ENCODE measurements at regions of chr10 and their contacts with region 1.

Region 1: DNA sequence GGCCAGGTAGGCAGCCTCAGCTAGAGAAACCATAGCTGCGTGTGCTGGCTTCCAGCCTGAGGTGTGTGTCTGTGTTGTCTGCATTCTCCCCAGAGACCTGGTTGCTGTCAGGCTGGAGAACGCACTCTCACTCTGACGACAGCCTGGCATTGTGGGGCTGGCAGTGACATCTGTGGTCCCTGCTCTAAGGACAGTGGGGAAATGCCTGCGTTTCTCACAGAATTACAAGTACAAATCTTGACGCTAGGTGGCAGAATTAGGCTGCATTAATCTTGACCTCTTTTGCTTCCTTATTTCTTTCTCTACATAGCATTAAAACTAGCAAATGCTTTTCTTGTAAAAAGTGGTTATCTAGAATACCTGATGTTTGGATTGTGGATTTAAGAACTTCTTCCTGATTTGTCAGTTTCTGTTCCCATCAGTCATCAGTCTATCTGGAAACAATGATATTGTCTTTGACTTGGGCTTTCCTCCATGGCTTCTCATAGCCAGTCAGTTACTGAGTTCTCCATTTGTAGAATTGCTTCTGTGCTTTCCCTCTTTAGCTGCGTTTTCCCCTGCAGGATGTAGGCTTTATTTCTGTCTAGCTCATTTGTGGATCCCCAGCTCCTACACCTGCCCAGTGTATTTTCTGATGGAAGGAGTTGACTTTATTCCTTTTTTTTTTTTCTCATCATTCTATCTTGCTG is 86.0 kb downstream of the FANK1 start:
- DNase-seq: peak; percentile 78
- H3K4me3 ChIP-seq: no peak overlapping the region
- H3K27ac ChIP-seq: no peak overlapping the region
- H3K4me1 ChIP-seq: no peaks in the 10 kb centered on the region
- H3K27me3 ChIP-seq: no peaks in the 10 kb centered on the region
- CTCF ChIP-seq: peak; percentile 39 to 42
- POLR2A ChIP-seq: no peak

Region 2: DNA sequence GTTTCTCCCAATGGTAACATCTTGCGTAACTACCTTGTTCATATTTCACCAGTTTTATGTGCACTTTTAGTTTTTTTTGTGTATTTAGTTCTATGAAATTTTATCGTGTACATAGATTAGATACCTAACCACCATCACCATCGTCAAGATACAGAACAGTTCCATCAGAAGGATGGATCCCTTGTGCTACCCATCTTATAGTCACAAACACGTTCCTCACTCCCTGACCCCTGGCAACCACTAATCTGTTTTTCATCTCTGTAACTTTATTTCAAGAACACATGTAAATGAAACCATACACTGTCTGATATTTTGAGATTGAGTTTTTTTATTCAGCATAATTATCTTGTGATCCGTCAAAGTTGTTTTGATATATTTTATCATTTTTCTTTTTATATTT is 56.2 kb before region 1 on chr10:
- CTCF ChIA-PET with region 1: no interaction called
- POLR2A ChIA-PET with region 1: no interaction called
- dilution Hi-C with region 1: no loop called
- intact Hi-C with region 1: no loop called
- DNase-seq: peak; percentile 17
- H3K4me3 ChIP-seq: no peak overlapping the region
- H3K27ac ChIP-seq: no peak overlapping the region
- H3K4me1 ChIP-seq: no peaks in the 10 kb centered on the region
- H3K27me3 ChIP-seq: no peaks in the 10 kb centered on the region
- CTCF ChIP-seq: no peak
- POLR2A ChIP-seq: no peak

Region 3: GRCh38 chr10:125936331-125936730 is 46.1 kb before region 1 on chr10:
- CTCF ChIA-PET with region 1: interaction called, 50 read pairs
- POLR2A ChIA-PET with region 1: no interaction called
- dilution Hi-C with region 1: no loop called
- intact Hi-C with region 1: no loop called
- DNase-seq: peak; percentile 28
- H3K4me3 ChIP-seq: no peak overlapping the region
- H3K27ac ChIP-seq: no peak overlapping the region
- H3K4me1 ChIP-seq: no peaks in the 10 kb centered on the region
- H3K27me3 ChIP-seq: peaks cover 2 to 3% of the 10 kb centered on the region in 2 experiments
- CTCF ChIP-seq: no peak
- POLR2A ChIP-seq: no peak

Region 4: GRCh38 chr10:125951290-125951689 is 31.1 kb before region 1 on chr10:
- CTCF ChIA-PET with region 1: no interaction called
- POLR2A ChIA-PET with region 1: no interaction called
- dilution Hi-C with region 1: no loop called
- intact Hi-C with region 1: no loop called
- DNase-seq: no peak
- H3K4me3 ChIP-seq: no peak overlapping the region
- H3K27ac ChIP-seq: no peak overlapping the region
- H3K4me1 ChIP-seq: no peaks in the 10 kb centered on the region
- H3K27me3 ChIP-seq: no peaks in the 10 kb centered on the region
- CTCF ChIP-seq: no peak
- POLR2A ChIP-seq: no peak

Region 5: DNA sequence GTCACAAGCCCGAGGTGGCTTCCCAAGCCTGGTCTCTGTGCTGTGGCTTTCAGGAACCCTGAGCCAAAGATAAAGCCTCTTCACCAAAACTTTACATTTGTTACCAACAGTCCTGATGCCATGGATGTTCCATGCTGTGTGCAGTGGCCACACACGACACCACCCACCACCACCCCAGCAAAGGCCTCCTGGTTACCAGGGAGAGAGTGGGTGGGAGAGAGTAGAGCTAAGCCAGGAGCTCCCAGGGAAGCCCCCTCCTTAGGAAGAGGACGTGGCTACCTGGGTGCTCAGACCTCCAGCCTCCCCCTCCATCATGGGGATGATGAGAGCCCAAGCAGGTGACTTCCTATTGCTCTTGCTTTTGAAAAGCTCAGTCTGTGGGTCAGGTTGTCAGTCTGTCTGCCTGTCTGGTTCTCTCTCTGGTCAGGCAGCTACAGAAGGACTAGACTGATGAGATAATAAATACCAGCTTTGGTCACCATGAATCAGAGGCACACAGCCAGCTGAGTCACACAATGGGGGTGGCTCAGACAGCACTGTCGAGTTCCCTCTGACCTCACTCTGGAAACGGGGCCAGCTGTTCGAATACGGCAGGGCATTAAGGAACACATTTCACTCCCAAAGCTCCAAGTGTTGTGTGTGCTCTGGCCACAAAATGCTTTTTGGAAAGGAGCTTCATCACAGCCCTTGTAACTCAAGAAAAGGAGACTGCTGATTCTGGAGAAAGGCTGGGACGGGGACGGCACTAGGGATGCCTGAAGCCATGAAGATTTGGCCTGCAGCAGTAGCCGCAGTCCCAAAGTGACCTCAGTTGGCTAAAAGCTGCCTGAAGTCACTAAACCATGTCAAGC is 80.0 kb after region 1 on chr10:
- CTCF ChIA-PET with region 1: interaction called, 7 read pairs
- POLR2A ChIA-PET with region 1: no interaction called
- dilution Hi-C with region 1: no loop called
- intact Hi-C with region 1: loop called (anchors 2 kb)
- DNase-seq: peak; percentile 97
- H3K4me3 ChIP-seq: no peak overlapping the region
- H3K27ac ChIP-seq: peak overlapping the region; percentile 97
- H3K4me1 ChIP-seq: peaks cover 50% of the 10 kb centered on the region
- H3K27me3 ChIP-seq: no peaks in the 10 kb centered on the region
- CTCF ChIP-seq: no peak
- POLR2A ChIP-seq: peak; percentile 37

Region 6: GRCh38 chr10:126160971-126161659 is 178.7 kb after region 1 on chr10:
- CTCF ChIA-PET with region 1: interaction called, 5 read pairs
- POLR2A ChIA-PET with region 1: no interaction called
- dilution Hi-C with region 1: no loop called
- intact Hi-C with region 1: loop called (anchors 1 kb)
- DNase-seq: no peak
- H3K4me3 ChIP-seq: no peak overlapping the region
- H3K27ac ChIP-seq: no peak overlapping the region
- H3K4me1 ChIP-seq: no peaks in the 10 kb centered on the region
- H3K27me3 ChIP-seq: no peaks in the 10 kb centered on the region
- CTCF ChIP-seq: no peak
- POLR2A ChIP-seq: no peak

Region 7: GRCh38 chr10:126387023-126387921 is 404.9 kb after region 1 on chr10:
- CTCF ChIA-PET with region 1: interaction called, 10 read pairs
- POLR2A ChIA-PET with region 1: no interaction called
- dilution Hi-C with region 1: no loop called
- intact Hi-C with region 1: loop called (anchors 1 kb)
- DNase-seq: peak; percentile 48
- H3K4me3 ChIP-seq: no peak overlapping the region
- H3K27ac ChIP-seq: no peak overlapping the region
- H3K4me1 ChIP-seq: no peaks in the 10 kb centered on the region
- H3K27me3 ChIP-seq: peaks cover 3 to 22% of the 10 kb centered on the region in 2 experiments
- CTCF ChIP-seq: peak; percentile 66 to 73
- POLR2A ChIP-seq: no peak

Region 8: DNA sequence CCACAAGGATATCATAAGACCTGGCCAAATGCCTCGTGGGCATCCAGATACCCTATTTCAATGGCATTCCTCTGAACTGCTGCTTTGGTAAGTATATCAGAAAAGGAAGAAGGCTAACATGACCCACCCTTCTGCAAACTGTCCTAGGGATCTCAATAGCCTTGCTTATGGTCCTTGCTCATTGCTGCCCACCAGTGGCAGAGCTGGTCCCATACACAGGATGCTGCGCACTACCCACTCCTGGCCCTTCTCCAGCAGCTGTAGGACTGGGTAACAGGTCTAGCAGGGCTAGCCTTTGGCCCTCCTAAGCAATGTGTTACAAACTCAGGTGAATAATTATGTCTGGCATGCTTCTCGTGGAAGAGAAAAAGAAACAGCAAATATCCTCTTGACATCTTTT is 615.6 kb after region 1 on chr10:
- CTCF ChIA-PET with region 1: no interaction called
- POLR2A ChIA-PET with region 1: no interaction called
- dilution Hi-C with region 1: no loop called
- intact Hi-C with region 1: loop called (anchors 1 kb)
- DNase-seq: peak; percentile 10
- H3K4me3 ChIP-seq: no peak overlapping the region
- H3K27ac ChIP-seq: no peak overlapping the region
- H3K4me1 ChIP-seq: no peaks in the 10 kb centered on the region
- H3K27me3 ChIP-seq: no peaks in the 10 kb centered on the region
- CTCF ChIP-seq: peak; percentile 18 to 39
- POLR2A ChIP-seq: no peak